ENCODE measurements at regions of chr3 and their contacts with region 1.

Region 1: GRCh38 chr3:119240591-119241434 is at the start of gene B4GALT4:
- DNase-seq: peak; percentile 59 to 89 (median 80)
- H3K4me3 ChIP-seq: peak within 1 kb of the TSS; percentile 55 to 93 (median 81)
- H3K27ac ChIP-seq: peak within 1 kb of the TSS; percentile 73 to 97 (median 91)
- H3K27me3 ChIP-seq: no peaks in the 10 kb centered on the region
- CTCF ChIP-seq: peak in 18 of 56 donors; percentile 14 to 40 (median 20)
- total RNA-seq, gene B4GALT4: 7.4 to 34.5 (median 16.0) TPM

Region 2: GRCh38 chr3:119145500-119146191 is 95.2 kb before region 1 on chr3 and contains the start of gene TEX55:
- intact Hi-C with region 1: loop called (anchors 1 to 5 kb)
- DNase-seq: no peak
- H3K4me3 ChIP-seq: no peak within 1 kb of the TSS
- H3K27ac ChIP-seq: no peak within 1 kb of the TSS
- H3K27me3 ChIP-seq: no peaks in the 10 kb centered on the region
- CTCF ChIP-seq: peak in 52 of 56 donors; percentile 12 to 72 (median 50)
- total RNA-seq, gene TEX55: not detected

Region 3: GRCh38 chr3:119156868-119157267 is 83.9 kb before region 1 on chr3:
- intact Hi-C with region 1: loop called in 1 of 2 experiments (anchors 5 kb)
- DNase-seq: no peak
- H3K4me3 ChIP-seq: no peak overlapping the region
- H3K27ac ChIP-seq: no peak overlapping the region
- H3K27me3 ChIP-seq: no peaks in the 10 kb centered on the region
- CTCF ChIP-seq: no peak

Region 4: GRCh38 chr3:119175872-119176756 is 64.7 kb before region 1 on chr3:
- intact Hi-C with region 1: no loop called
- DNase-seq: no peak
- H3K4me3 ChIP-seq: no peak overlapping the region
- H3K27ac ChIP-seq: no peak overlapping the region
- H3K27me3 ChIP-seq: no peaks in the 10 kb centered on the region
- CTCF ChIP-seq: no peak

Region 5: DNA sequence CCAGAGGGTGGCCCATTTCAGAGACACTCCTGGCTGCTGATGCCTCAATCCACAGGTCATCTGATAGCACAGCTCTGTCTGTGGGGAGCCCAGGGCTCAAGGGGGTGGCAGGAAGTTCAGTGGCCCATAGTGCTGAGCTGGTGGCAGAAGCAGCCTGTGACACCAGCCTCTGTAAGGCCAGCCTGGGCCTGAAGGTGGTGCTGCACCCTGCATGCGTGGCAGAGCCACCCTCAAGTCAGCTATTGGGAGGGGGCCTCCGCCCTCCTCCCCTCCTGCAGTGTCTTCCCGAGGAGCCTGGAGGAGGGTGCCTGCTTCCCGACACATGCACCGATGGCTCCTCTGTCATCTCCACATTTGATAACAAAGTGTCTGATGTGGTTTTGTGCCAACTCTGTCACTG is 359.9 kb after region 1 on chr3:
- intact Hi-C with region 1: no loop called
- DNase-seq: no peak
- H3K4me3 ChIP-seq: no peak overlapping the region
- H3K27ac ChIP-seq: no peak overlapping the region
- H3K27me3 ChIP-seq: no peaks in the 10 kb centered on the region
- CTCF ChIP-seq: peak in 14 of 56 donors; percentile 11 to 36 (median 20)